Cardiac septum (tissue), 1 donor: ENCODE measurements at regions of chr15 and their contacts with region 1.

Region 1: DNA sequence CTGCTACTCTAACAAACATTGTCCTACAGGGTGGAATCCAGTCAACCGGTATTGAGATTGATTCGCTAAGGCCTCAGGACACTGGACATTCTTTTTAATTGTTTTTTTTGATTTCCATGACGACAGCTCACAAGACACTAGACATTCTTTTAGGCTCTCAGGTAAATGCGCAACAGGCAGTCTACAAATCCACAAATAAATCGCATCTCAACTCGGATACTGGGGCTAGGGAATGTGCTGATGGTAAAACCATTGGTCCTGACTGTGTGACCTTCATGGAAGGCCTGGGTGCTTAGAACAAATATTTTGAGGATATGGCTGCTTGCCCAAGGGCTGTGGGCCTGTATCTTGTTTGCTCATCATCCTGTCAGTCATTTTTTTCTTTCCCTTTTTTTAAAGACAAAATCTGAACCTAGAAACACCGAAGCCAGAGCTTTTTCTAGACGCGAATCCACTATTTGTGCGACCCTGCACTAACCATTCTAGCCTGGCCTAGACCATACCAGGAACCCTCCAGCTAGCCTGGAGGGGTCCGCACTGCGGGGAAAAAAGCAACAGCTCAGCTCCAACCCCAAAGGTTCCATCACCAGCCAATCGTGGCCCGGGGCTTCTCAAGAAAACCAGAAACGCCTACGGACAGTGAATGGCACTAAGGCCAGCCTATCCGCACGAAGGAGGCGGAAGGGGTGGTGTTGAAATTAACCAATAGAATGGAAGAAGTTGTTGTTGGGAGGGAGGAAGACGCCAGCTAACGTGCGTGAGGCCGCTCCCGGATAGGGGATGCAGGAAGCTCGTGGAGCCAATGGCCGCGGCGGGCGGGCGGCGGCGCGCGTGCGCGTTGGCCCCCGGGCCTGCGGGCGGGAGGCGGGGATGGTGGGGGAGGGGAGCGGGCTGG is 18.1 kb upstream of the CHD2 start:
- DNase-seq: peak; percentile 99

Region 2: GRCh38 chr15:92831655-92832328 is 50.3 kb before region 1 on chr15:
- intact Hi-C with region 1: loop called (anchors 1 kb)
- DNase-seq: peak; percentile 96

Region 3: DNA sequence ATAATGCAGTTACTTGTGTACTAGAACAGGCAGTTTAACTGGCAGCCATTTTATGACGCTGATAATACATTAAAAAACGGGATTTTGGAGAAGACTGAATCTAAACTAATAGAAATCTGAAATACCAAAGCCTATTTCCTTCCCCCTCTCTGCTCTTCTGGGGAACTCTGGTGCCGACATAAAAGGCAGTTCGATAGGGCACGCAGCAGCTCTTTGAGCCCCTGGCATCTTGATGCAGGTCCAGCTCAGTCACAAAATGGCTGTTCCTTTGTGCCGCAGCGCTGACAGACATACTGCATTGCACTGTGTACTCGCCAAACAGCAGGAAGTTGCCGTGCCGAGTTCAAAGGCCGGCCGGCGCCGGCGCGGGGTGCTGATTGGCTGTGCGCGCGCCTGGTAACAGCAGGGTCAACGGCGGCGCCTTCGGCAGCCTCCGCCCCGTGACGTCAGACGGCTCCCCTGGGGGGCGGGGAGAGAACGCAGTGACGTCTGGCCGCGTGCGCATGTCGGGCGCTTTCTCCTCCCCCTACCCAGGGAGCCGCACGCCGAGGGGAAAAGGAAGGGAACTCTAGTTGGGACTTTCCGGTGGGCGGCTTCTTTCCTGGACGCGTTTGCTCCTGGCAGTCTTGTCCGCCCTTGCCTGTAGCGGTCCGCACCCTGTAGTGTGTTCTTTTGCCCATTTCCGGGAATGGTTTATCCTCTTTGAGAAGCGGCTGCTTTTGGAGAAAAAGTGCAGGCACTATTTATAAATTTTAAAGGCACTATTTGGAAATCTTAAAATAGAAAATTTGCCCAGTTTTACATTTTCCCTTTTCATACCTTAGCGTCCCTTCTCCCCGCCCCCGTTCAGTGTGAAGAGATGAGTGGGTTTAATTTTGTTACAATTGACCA is 22.1 kb after region 1 on chr15:
- intact Hi-C with region 1: loop called (anchors 1 kb)
- DNase-seq: peak; percentile 99

Region 4: GRCh38 chr15:92917606-92918407 is 35.8 kb after region 1 on chr15:
- intact Hi-C with region 1: loop called (anchors 5 kb)
- DNase-seq: peak; percentile 94

Region 5: GRCh38 chr15:92954578-92954977 is 72.5 kb after region 1 on chr15:
- intact Hi-C with region 1: no loop called
- DNase-seq: no peak

Region 6: DNA sequence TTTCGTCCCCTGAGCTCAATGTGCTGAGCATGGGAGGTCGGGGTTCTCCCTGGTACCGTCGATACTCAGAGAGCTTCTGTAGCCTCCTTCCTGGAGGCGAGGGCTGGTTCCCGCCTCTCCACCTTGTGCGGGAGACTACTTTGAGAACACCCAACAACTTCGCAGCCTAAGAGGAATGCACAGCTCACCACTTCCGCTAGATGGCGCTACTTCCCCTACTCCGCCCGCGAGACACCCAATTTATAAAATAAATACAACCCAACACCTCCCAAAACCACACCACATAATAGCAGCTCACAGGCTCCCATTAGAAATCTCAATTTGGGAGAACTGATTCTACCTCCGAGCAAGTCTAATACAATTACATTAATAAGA is 205.8 kb after region 1 on chr15:
- intact Hi-C with region 1: no loop called
- DNase-seq: no peak